Activated CD4-positive, alpha-beta memory T cell treated with anti-CD3 and anti-CD28 coated beads for 36 hours (primary cell): ENCODE measurements at regions of chr2 and their contacts with region 1.

Region 1: DNA sequence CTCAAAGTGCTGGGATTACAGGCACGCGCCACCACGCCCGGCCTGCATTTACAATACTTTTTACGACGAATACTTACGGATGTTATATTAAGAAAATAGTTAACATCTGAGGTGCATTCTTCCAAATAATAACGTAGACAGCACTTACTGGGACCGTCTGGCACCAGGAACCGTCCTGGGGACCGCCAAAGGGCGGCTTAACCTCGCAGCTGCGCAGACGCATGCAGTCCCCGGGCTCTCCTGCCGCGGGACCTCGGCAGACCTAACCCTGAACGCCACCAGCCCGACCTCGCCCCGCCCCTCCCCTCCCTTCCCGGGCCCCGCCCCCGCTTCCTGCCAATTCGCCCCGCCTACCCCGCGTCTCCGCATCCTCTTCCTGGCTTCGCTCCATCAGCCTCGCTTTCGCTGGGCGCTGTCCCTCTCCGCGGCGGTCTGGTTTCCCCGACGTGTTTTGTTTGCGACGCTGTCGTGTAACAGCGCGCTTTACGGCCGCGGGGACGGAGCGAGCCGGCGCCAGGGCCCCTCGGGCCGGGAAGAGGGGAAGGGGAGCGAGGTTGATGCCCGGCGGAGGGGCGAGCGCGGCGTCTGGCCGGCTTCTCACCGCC is at the start of gene CNOT11:
- DNase-seq: peak; percentile 99
- H3K4me3 Mint-ChIP-seq: peak within 1 kb of the TSS; percentile 95
- H3K27ac Mint-ChIP-seq: peak within 1 kb of the TSS; percentile 91
- H3K4me1 Mint-ChIP-seq: peaks cover 39% of the 10 kb centered on the region
- H3K27me3 Mint-ChIP-seq: no peaks in the 10 kb centered on the region
- total RNA-seq, gene CNOT11: 54.6 to 56.2 TPM

Region 2: DNA sequence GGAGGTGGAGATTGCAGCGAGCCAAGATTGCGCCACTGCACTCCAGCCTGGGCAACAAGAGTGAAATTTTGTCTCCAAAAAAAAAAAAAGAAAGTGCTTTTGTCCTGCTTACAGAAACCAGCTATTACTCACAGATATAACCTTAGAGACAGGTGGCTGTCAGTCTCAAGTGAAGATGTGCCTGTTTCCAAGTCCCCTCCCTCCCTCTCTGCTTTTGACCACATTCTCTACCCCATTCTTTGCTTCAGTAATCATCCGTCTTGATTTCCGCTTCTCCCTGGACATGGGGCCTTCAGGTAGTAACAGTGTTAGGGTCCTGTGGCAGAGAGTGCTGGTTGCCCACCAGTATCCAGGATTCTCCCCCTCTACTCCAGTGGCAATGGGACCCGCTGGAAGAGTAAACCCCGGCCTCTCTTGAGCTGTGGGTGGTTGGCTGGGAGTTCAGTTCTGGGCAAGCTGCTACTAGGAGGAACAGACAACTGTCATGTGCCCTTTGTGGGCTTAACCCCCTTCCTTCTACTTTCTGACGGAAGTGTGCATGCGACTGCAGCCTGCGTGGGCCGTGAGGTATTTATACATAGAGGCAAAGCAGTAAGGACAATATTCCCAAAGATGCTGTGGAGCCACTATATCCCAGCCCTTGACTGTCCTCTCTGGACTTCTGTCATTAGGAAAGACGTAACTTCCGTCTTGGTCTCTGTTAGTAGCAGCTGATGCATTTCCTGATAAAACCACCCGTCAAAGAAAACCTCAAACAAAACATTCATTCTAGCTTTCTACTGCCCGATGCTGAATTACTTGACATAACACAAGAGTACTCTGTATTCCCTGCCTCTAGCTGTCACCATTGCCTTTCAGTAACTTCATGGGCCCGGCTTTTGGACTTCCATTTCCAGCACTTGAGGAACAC is 671.9 kb before region 1 on chr2:
- CTCF ChIA-PET with region 1: no interaction called
- POLR2A ChIA-PET with region 1: no interaction called
- intact Hi-C with region 1: loop called (anchors 2 kb)
- DNase-seq: peak; percentile 64
- H3K4me3 Mint-ChIP-seq: peak overlapping the region; percentile 71
- H3K27ac Mint-ChIP-seq: peak overlapping the region; percentile 96
- H3K4me1 Mint-ChIP-seq: peaks cover 38% of the 10 kb centered on the region
- H3K27me3 Mint-ChIP-seq: no peaks in the 10 kb centered on the region

Region 3: DNA sequence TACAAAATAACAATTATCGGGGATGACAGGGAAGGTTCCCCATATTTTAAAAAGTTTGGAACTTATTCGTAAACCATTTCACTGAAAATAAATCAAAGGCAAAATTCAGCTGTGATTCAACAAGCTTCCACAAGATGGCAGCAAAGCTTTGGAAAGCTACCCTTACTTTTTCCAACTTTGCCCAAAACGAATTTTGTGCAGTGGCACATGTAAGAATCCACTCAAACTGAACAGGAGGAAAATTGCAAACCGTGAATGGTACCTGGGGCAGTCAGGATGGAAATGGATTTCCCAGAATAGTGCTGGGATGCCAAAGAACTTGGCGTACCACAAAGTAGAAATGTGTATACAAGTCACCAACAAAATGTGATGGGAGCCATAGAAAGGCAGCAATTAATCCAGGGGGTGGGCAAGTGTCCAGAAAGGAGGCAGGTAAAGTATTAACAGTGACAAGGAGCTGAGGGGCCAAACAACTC is 239.8 kb before region 1 on chr2:
- CTCF ChIA-PET with region 1: interaction called, 15 read pairs
- POLR2A ChIA-PET with region 1: interaction called, 6 read pairs
- intact Hi-C with region 1: no loop called
- DNase-seq: peak; percentile 24
- H3K4me3 Mint-ChIP-seq: no peak overlapping the region
- H3K27ac Mint-ChIP-seq: no peak overlapping the region
- H3K4me1 Mint-ChIP-seq: peaks cover 29% of the 10 kb centered on the region
- H3K27me3 Mint-ChIP-seq: no peaks in the 10 kb centered on the region

Region 4: GRCh38 chr2:101272045-101272784 is 19.7 kb after region 1 on chr2:
- CTCF ChIA-PET with region 1: interaction called, 9 read pairs
- POLR2A ChIA-PET with region 1: interaction called, 5 read pairs
- intact Hi-C with region 1: loop called (anchors 1 kb)
- DNase-seq: no peak
- H3K4me3 Mint-ChIP-seq: no peak overlapping the region
- H3K27ac Mint-ChIP-seq: peak overlapping the region; percentile 70
- H3K4me1 Mint-ChIP-seq: peaks cover 46% of the 10 kb centered on the region
- H3K27me3 Mint-ChIP-seq: no peaks in the 10 kb centered on the region

Region 5: GRCh38 chr2:101328474-101329007 is 76.0 kb after region 1 on chr2:
- CTCF ChIA-PET with region 1: no interaction called
- POLR2A ChIA-PET with region 1: interaction called, 7 read pairs
- intact Hi-C with region 1: loop called (anchors 5 kb)
- DNase-seq: peak; percentile 57
- H3K4me3 Mint-ChIP-seq: no peak overlapping the region
- H3K27ac Mint-ChIP-seq: no peak overlapping the region
- H3K4me1 Mint-ChIP-seq: peaks cover 38% of the 10 kb centered on the region
- H3K27me3 Mint-ChIP-seq: no peaks in the 10 kb centered on the region

Region 6: DNA sequence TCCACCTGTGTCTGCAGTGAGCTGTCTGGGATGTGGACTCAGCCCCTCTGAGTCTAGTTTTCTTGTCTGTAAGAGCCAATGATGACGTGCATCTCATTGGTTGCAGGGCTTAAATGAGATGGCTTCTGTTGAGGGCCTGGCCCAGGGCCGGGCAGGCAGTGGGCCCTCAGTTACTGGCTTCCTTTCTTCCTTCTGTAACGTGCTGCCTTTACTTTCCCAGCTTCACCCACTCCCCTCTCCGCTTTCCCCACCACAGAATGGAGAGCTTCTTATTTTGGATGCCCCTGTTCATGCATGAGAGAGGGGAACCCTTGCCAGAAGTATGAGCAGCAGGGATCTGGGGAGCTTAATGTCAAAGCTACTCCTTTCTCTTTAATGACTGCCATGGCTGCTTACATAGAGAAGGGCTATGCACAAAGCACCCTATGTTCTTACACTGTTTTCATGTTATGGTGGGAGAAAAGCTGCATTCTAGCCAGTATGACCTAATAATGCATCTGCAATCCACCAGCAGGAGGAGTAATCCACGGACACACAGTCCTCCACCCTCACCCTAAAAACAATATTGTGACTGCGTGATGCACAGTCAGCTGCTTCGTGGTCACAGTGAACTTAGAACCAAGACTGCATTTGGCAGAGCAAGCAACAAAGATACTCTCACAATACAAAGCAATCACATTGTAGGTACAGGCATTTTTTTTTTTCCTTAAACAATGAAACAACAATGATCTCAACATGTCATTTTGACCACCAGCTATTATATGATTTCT is 97.6 kb after region 1 on chr2:
- CTCF ChIA-PET with region 1: no interaction called
- POLR2A ChIA-PET with region 1: no interaction called
- intact Hi-C with region 1: no loop called
- DNase-seq: peak; percentile 17
- H3K4me3 Mint-ChIP-seq: no peak overlapping the region
- H3K27ac Mint-ChIP-seq: no peak overlapping the region
- H3K4me1 Mint-ChIP-seq: peaks cover 5% of the 10 kb centered on the region
- H3K27me3 Mint-ChIP-seq: no peaks in the 10 kb centered on the region